HEK293 (cell line): ENCODE measurements at regions of chr15 and their contacts with region 1.

Region 1: DNA sequence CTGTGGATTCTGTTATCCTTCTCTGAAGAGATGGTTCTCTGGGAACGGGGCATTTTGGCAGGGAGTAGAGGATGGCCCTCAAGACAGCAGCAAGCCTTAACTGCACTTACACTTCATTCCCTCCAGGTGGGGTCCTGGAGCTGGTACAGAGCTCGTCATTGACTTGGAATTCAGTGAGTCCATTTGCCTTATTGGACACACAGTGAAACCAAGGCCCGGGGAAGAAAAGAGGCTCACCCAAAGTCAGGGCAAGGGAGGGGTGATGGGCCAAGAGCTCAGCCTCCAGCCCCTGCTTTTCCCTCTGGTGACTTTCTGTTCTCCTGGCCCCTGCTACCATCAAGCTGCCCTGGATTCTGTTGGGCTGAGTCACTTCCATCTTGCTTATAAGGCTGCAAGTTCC is 125.6 kb downstream of the ETFA start:
- H3K4me3 ChIP-seq: no peak overlapping the region
- H3K27ac ChIP-seq: no peak overlapping the region
- H3K4me1 ChIP-seq: no peaks in the 10 kb centered on the region; the same call in 1 of the 2 replicates
- CTCF ChIP-seq: no peak

Region 2: DNA sequence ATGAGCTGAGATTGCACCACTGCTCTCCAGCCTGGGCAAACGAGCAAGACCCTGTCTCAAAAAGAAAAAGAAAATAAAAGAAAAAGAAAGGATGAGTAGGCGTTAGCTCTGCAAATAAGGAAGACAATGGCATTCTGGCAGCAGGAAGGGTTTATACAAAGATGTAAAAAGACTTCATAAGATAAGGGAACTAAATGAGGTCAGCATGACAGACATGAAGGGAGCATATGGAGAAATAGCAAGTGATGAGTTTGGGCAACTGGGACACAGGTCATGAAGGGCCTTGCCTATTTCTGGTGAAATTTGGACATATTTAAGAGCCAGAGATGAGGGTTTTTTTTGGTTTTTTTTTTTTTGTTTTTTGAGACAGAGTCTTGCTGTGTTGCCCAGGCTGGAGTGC is 101.5 kb before region 1 on chr15:
- CTCF ChIA-PET with region 1: no interaction called
- POLR2A ChIA-PET with region 1: no interaction called
- H3K4me3 ChIP-seq: no peak overlapping the region
- H3K27ac ChIP-seq: no peak overlapping the region
- H3K4me1 ChIP-seq: no peaks in the 10 kb centered on the region
- CTCF ChIP-seq: no peak

Region 3: GRCh38 chr15:76196269-76197231 is 10.8 kb after region 1 on chr15:
- CTCF ChIA-PET with region 1: interaction called, 27 read pairs
- POLR2A ChIA-PET with region 1: no interaction called
- H3K4me3 ChIP-seq: no peak overlapping the region
- H3K27ac ChIP-seq: no peak overlapping the region
- H3K4me1 ChIP-seq: peaks cover 6% of the 10 kb centered on the region; the same call in 1 of the 2 replicates
- CTCF ChIP-seq: no peak

Region 4: GRCh38 chr15:76512971-76513370 is 327.3 kb after region 1 on chr15:
- CTCF ChIA-PET with region 1: no interaction called
- POLR2A ChIA-PET with region 1: no interaction called
- H3K4me3 ChIP-seq: no peak overlapping the region
- H3K27ac ChIP-seq: no peak overlapping the region
- H3K4me1 ChIP-seq: no peaks in the 10 kb centered on the region
- CTCF ChIP-seq: no peak

Region 5: GRCh38 chr15:76533060-76533822 is 347.5 kb after region 1 on chr15:
- CTCF ChIA-PET with region 1: no interaction called
- POLR2A ChIA-PET with region 1: no interaction called
- H3K4me3 ChIP-seq: no peak overlapping the region
- H3K27ac ChIP-seq: no peak overlapping the region
- H3K4me1 ChIP-seq: peaks cover 2% of the 10 kb centered on the region; the same call in 1 of the 2 replicates
- CTCF ChIP-seq: no peak